ENCODE measurements at regions of chr17 and their contacts with region 1.

Region 1: DNA sequence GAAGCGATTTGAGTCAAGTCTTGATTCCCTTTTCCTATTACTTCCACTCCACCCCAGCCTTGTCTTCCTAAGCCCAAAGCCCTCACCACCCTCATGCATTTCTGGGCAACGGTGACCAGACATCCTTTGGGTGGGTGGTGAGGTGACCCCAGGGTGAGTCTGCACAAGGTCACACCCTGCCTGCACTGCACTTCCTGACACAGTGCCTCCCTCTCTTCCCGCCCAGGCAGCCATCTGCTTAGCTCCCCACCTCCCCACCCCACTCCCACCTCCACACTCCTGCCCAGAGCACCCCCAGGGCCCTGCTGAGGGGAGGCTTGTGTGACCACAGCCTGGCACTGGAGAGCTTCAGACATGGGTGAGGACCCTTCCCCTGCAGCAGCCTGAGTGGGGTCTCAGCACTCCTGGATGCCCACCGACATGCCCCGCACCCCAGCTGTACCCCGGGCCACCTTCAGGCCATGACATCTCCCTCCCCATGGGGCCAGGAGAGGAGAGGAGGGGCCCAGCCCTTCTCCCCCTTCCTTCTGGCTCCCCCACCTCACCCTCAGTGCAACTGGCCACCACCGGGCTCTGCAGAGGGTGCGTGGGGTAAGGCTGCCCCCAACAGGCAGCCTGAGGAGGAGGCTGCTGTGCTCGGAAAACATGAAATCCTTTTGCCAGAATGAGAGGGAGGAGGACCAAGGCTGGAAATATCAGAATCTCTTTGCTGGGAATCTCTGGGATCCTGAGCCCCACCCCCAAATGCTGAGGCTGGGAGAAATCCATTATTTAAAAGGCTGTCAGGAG is 68.6 kb downstream of the CCT6B start:
- DNase-seq: peak in 1 of 2 experiments; percentile 36
- H3K4me3 ChIP-seq: no peak overlapping the region
- H3K4me3 Mint-ChIP-seq: no peak overlapping the region
- H3K27ac Mint-ChIP-seq: no peak overlapping the region
- H3K4me1 ChIP-seq: no peaks in the 10 kb centered on the region
- H3K4me1 Mint-ChIP-seq: no peaks in the 10 kb centered on the region
- H3K27me3 ChIP-seq: no peaks in the 10 kb centered on the region; the same call in none of the 2 replicates
- H3K27me3 Mint-ChIP-seq: peaks cover 20% of the 10 kb centered on the region
- CTCF ChIP-seq: peak; percentile 39 to 62

Region 2: GRCh38 chr17:34542700-34543336 is 349.8 kb before region 1 on chr17:
- CTCF ChIA-PET with region 1: no interaction called
- POLR2A ChIA-PET with region 1: no interaction called
- intact Hi-C with region 1: loop called (anchors 2 kb)
- DNase-seq: peak in 1 of 2 experiments; percentile 62
- H3K4me3 ChIP-seq: no peak overlapping the region
- H3K4me3 Mint-ChIP-seq: no peak overlapping the region
- H3K27ac Mint-ChIP-seq: no peak overlapping the region
- H3K4me1 ChIP-seq: no peaks in the 10 kb centered on the region
- H3K4me1 Mint-ChIP-seq: no peaks in the 10 kb centered on the region
- H3K27me3 ChIP-seq: no peaks in the 10 kb centered on the region; the same call in none of the 2 replicates
- H3K27me3 Mint-ChIP-seq: peaks cover 18% of the 10 kb centered on the region
- CTCF ChIP-seq: peak; percentile 79 to 88

Region 3: DNA sequence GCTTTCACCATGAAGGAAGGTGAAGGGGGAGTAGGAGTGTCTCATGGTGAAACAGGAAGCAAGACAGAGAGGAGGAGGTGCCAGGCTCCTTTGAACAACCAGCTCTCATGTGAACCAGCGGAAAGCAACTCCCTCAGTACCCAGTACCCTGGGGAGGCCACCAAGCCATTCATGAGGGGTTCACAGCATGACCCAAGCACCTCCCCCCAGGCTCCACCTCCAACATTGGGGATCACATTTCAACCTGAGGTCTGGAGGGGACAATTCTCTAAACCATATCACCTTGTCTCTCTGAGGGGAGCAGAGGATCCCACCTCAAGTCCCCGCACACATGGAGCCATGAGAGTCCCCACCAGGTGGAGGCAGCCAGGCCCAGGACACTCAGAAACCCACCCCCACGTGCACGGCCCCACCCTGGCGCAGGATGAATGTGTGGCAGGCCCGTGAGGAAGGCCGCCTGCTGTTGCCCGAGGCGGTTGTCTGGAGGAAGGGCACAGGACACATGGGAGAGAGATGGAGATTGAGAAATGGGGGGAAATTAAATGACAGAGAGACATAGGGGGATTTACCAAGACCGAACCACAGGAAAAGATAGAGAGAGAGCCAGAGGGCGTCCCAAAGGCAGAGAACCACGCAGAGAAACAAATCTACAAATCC is 227.4 kb before region 1 on chr17:
- CTCF ChIA-PET with region 1: no interaction called
- POLR2A ChIA-PET with region 1: no interaction called
- intact Hi-C with region 1: no loop called
- DNase-seq: no peak
- H3K4me3 ChIP-seq: no peak overlapping the region
- H3K4me3 Mint-ChIP-seq: no peak overlapping the region
- H3K27ac Mint-ChIP-seq: no peak overlapping the region
- H3K4me1 ChIP-seq: no peaks in the 10 kb centered on the region
- H3K4me1 Mint-ChIP-seq: no peaks in the 10 kb centered on the region
- H3K27me3 ChIP-seq: no peaks in the 10 kb centered on the region
- H3K27me3 Mint-ChIP-seq: peaks cover 9% of the 10 kb centered on the region
- CTCF ChIP-seq: no peak

Region 4: GRCh38 chr17:35596530-35597233 is 704.0 kb after region 1 on chr17:
- CTCF ChIA-PET with region 1: no interaction called
- POLR2A ChIA-PET with region 1: no interaction called
- intact Hi-C with region 1: no loop called
- DNase-seq: no peak
- H3K4me3 ChIP-seq: no peak overlapping the region
- H3K4me3 Mint-ChIP-seq: no peak overlapping the region
- H3K27ac Mint-ChIP-seq: no peak overlapping the region
- H3K4me1 ChIP-seq: no peaks in the 10 kb centered on the region; the same call in 1 of the 2 replicates
- H3K4me1 Mint-ChIP-seq: no peaks in the 10 kb centered on the region
- H3K27me3 ChIP-seq: no peaks in the 10 kb centered on the region
- H3K27me3 Mint-ChIP-seq: no peaks in the 10 kb centered on the region
- CTCF ChIP-seq: no peak

Measured in Caco-2 (cell line).